ENCODE measurements at regions of chr4 and their contacts with region 1.

Region 1: DNA sequence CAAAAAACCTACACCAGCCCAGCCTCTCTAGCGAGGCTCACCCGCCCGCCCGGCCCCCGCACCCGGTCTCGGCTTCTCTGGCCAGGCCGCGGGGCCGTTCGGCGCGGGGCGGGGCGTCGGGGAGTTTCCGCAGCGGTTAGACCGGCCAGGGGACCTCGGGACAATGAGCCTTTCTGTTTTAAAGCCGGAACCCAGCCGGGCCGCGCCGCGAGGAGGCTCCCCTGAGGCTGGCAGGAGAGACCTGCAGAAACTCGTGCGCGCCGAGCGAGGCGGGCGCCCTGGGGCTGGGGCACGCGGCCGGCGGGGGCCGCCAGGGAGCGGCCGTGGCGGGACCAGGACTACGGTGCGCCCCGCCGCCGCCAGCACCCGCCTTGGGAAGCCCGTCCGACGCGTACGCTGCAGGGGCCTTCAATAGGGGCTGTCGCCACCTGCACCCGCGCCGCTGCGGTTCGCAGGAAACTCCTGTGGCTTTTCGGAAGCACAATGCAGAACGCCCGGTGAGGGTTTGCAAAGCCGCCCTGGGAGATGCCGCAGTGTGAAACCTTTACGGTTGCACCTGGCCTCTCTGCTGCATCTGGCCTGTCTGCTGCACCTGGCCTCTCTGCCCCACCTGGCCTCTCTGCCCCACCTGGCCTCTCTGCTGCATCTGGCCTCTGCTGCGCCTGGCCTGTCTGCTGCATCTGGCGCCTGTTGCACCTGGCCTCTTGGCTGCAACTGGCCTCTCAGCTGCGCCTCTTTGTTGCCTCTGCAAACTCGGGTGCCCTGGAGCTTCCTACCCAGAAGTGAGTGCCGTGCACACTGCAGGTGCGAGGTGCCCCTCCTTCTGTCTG is 63.9 kb downstream of the TRAPPC11 start:
- DNase-seq: peak; percentile 44
- H3K4me3 Mint-ChIP-seq: peak overlapping the region; percentile 84
- H3K27ac Mint-ChIP-seq: no peak overlapping the region
- H3K4me1 Mint-ChIP-seq: peaks cover 15% of the 10 kb centered on the region
- H3K27me3 Mint-ChIP-seq: peaks cover 34% of the 10 kb centered on the region

Region 2: DNA sequence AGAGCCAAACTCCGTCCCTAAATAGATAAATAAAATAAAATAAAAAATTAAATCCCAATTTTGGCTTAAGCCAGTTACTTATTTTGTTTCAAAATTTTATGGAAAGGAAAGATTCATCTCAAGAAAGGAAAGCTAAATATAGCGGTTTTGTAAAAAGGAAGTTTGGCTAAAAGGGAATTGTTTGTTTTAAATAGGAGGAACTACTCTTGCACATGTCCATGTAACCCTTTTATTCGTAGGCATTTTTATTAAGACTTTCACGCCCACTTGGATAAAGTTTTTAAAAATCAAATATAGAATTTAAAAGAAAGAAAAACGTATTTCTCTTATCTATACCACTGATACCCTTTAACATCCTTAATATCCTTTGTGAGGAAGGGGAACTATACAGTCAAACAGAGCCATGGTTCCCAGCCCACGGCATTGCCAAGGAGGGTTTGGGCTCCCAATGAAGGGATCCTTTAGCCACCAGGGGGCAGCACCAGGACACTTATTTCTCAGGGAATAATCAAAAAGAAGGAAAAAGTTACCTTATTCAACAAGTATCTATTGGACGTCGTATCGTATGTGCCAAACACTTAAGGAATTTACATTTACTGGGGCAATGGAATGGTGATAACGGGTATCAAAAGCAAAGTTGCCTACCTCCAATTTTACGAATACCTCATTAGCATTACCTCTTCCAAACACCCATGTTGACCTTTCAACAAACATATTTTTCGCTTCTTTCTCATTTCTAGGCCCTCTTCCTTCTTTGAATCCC is 250.8 kb before region 1 on chr4:
- intact Hi-C with region 1: loop called (anchors 1 kb)
- DNase-seq: peak; percentile 56
- H3K4me3 Mint-ChIP-seq: no peak overlapping the region
- H3K27ac Mint-ChIP-seq: no peak overlapping the region
- H3K4me1 Mint-ChIP-seq: peaks cover 6% of the 10 kb centered on the region
- H3K27me3 Mint-ChIP-seq: peaks cover 5% of the 10 kb centered on the region

Region 3: DNA sequence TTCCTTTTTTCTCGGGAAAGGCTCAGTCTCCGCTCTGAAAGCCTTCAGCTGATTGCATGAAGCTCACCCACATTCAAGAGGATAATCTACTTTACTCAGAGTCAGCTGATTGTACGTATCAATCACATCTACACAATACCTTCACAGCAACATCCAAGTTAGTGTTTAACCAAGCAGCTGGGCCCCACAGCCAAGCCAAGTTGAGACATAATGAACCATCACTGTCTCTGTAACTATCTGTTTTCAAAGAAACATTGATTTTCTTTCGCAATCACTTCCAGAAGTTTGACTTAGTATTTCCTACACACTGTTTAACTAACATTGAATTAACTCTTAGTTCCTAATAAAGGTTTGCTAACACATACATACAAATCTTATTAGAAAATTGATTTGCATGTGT is 104.3 kb before region 1 on chr4:
- intact Hi-C with region 1: loop called (anchors 1 kb)
- DNase-seq: no peak
- H3K4me3 Mint-ChIP-seq: no peak overlapping the region
- H3K27ac Mint-ChIP-seq: no peak overlapping the region
- H3K4me1 Mint-ChIP-seq: no peaks in the 10 kb centered on the region
- H3K27me3 Mint-ChIP-seq: peaks cover 14% of the 10 kb centered on the region

Region 4: DNA sequence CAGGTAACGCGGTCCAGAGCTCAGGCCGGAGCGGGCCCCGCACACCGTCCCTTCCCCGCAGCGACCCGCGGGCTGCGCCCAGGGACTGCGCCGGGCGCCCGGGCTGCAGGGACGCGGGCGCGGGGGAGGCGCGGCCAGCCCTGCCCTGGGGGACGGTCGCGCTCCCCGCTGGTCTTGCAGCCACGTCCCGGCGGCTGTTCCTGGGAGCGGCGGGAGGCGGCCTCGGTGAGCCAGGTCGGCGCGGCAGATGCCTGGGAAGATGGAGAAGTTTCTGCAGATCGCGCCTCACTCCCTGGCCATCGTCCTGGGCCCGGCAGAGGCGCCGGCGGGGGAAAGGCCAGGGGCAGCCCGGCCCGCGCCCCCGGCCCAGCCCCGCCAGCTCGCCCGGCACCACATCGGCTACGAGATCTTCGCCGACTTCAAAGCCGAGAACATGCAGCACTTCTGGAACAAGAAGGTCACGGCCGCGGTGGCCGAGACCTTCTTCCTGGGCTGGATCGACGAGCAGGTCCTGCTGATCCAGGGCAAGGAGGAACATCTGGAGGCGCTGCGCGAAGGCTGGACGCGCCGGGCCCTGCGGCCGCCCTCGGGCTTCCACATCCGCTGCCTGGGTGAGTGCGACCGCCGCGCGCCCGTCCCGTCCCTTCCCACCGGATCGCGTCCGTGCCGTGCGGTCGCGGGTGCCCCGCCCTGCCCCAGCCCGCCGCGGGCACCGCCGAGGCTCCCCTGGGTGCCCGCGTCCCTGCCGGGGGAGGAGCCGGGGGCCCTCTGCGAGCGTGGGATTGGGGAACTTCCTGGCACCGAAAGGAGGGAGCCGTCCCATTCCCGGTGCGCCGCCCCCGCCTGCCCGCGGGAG is 74.7 kb after region 1 on chr4:
- intact Hi-C with region 1: loop called (anchors 5 kb)
- DNase-seq: no peak
- H3K4me3 Mint-ChIP-seq: no peak overlapping the region
- H3K27ac Mint-ChIP-seq: no peak overlapping the region
- H3K4me1 Mint-ChIP-seq: peaks cover 12% of the 10 kb centered on the region
- H3K27me3 Mint-ChIP-seq: peaks cover 52% of the 10 kb centered on the region